ENCODE measurements at regions of chr7 and their contacts with region 1.

Region 1: DNA sequence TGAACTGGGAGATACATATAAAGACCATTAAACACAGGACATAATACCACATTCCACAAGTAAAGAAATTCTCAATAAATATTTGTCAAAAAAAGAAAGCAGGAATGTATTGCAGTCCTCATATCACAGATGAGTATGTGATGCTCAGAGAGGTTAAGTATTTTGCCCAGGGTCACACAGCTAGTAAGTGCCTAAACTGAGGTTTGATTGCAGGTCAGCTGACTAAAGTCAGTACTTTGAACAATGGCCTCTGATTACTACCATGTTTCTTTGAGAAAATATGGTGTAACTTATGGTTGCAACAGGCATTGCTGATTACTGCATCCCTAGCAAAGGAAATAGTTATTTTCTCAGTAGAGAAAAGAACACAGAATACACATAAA is 267.1 kb downstream of the ELMO1 start:
- DNase-seq: no peak
- H3K4me3 Mint-ChIP-seq: no peak overlapping the region
- H3K27ac Mint-ChIP-seq: no peak overlapping the region
- H3K4me1 Mint-ChIP-seq: no peaks in the 10 kb centered on the region
- H3K27me3 Mint-ChIP-seq: peaks cover 10% of the 10 kb centered on the region
- CTCF ChIP-seq: no peak

Region 2: DNA sequence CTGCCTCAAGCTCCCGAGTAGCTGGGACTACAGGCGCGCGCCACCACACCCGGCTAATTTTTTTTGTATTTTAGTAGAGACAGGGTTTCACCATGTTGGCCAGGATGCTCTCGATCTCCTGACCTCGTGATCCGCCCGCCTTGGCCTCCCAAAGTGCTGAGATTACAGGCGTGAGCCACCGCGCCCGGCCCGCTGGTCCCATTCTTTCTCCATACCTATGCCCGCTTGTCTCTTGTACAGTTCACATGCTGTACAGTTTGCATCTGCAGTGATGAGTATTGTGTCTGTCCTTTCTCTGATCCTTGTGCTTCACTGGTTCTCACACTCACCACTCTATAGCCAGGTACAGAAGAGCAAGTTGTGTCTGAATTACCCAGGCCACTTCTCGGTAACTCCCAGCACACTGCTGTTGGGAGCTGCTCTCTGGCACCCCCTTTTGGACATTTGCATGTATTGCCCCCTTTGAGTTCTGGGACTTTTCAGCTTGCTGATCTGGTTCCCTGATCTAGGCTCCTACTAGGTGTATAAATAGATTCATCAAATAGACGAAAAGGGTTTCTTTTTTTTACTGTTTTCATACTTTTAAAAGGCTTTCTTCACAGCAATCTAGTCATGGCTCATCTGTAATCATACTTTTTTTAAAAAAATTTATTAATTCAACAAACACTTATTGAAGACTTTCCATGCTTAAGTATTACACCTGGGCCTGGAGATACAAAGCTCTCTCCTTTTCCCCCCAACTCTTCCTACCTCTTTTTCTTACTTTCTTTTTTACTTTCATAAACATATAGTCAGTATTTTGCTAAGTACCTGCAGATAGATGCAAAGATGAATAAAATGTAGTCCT is 510.7 kb before region 1 on chr7:
- CTCF ChIA-PET with region 1: interaction called, 24 read pairs
- POLR2A ChIA-PET with region 1: no interaction called
- intact Hi-C with region 1: loop called (anchors 1 kb)
- DNase-seq: peak; percentile 85
- H3K4me3 Mint-ChIP-seq: no peak overlapping the region
- H3K27ac Mint-ChIP-seq: no peak overlapping the region
- H3K4me1 Mint-ChIP-seq: peaks cover 28% of the 10 kb centered on the region
- H3K27me3 Mint-ChIP-seq: no peaks in the 10 kb centered on the region
- CTCF ChIP-seq: peak; percentile 85

Region 3: DNA sequence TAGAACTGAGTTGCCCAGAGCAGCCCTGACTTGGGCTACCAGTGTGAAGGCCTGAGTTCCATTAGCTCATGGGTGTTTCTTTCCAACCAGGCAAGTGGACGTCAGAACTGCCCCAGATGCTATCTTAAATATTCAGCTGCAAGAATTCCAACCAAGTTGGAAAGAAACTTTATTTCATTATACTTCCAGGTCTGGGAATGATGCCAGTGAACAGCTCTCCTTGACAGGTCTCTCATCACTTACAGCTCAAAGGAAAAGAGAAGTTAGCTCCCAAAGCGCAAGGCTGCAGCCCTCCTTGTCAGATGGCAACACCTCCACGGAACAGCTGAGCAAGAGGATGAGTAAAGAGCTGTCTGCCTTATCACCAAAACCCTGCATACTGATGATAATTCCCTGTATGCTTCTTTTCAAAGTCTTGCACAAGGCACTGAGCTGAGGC is 201.7 kb before region 1 on chr7:
- CTCF ChIA-PET with region 1: interaction called, 101 read pairs
- POLR2A ChIA-PET with region 1: no interaction called
- intact Hi-C with region 1: no loop called
- DNase-seq: no peak
- H3K4me3 Mint-ChIP-seq: no peak overlapping the region
- H3K27ac Mint-ChIP-seq: no peak overlapping the region
- H3K4me1 Mint-ChIP-seq: no peaks in the 10 kb centered on the region
- H3K27me3 Mint-ChIP-seq: peaks cover 22% of the 10 kb centered on the region
- CTCF ChIP-seq: no peak

Region 4: DNA sequence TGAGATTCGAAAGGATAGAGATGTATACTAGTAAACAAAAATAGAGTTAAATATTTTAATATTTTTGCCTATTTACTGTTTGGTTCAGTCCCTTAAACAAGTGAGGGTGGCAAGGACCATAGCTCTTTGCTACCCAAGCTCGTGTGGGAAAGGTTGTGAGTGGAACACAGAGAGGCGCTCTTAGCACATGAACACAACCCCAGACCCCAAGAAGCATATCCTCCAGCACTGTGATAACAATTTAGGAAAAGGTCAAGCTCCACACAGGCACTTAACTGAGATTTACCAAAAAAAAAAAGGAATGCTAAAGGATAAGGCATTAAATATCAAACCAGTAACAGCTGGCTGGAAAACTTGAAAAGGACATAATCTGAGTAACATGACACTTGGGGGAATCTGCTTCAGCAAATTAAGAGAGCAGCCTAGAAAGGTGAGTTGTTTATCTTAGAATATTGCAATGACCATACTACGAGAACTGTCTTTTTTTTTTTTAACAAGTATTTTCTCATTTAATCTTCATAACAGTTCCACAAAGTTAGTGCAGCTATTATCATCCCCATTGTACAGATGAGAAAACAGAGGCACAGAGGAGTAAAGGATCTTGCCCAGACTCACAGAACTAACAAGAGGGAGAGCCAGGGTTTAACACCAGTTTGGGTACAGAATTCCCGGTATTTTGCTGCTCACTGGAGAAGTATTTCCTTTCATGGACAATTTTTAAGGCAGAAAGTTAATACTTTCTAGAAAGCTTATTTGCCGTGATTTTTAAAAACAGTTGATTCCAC is 153.8 kb before region 1 on chr7:
- CTCF ChIA-PET with region 1: interaction called, 6 read pairs
- POLR2A ChIA-PET with region 1: no interaction called
- intact Hi-C with region 1: loop called (anchors 5 kb)
- DNase-seq: peak; percentile 16
- H3K4me3 Mint-ChIP-seq: no peak overlapping the region
- H3K27ac Mint-ChIP-seq: no peak overlapping the region
- H3K4me1 Mint-ChIP-seq: peaks cover 17% of the 10 kb centered on the region
- H3K27me3 Mint-ChIP-seq: no peaks in the 10 kb centered on the region
- CTCF ChIP-seq: no peak

Region 5: DNA sequence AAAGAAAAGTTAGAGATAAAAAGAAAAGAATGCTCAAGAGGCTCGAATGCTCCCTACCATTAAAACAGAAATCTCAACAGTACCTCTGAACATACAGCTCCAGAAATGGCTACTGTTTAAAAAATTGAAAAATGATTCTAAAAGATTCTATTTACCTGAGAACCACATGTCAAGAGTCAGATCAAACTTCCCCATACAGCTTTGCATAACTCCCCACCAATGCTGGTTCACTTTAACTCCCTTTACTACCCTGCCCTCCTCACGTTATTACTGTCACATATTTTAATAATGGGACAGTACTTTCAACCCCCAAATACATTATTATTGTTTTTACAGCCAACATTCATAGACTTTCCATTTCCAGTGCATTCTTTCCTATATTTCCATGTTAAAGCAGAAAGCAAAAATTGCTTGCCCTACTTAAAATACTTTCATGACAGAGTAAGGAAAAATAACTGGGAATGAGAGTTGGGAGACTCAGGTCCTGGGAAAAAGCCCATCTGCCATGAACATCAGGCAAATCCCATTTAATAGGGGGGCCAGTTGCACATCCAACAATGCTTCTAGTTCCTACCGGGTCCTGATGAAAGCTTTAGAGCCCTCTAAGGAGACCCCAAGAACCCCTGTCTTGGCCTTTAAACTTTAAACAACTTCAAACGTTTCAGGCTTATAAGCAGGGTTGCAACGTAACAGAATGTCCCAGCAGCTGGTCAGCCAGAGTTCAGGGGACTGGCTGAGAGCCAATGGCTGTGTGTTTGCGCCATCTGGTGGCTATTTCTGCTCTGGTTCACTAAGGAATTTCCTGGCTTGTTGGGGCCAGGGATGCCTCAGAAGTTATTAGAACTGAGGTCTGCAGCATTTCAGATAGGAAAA is 19.7 kb after region 1 on chr7:
- CTCF ChIA-PET with region 1: interaction called, 25 read pairs
- POLR2A ChIA-PET with region 1: no interaction called
- intact Hi-C with region 1: no loop called
- DNase-seq: peak; percentile 79
- H3K4me3 Mint-ChIP-seq: no peak overlapping the region
- H3K27ac Mint-ChIP-seq: no peak overlapping the region
- H3K4me1 Mint-ChIP-seq: peaks cover 6% of the 10 kb centered on the region
- H3K27me3 Mint-ChIP-seq: no peaks in the 10 kb centered on the region
- CTCF ChIP-seq: peak; percentile 86

Region 6: DNA sequence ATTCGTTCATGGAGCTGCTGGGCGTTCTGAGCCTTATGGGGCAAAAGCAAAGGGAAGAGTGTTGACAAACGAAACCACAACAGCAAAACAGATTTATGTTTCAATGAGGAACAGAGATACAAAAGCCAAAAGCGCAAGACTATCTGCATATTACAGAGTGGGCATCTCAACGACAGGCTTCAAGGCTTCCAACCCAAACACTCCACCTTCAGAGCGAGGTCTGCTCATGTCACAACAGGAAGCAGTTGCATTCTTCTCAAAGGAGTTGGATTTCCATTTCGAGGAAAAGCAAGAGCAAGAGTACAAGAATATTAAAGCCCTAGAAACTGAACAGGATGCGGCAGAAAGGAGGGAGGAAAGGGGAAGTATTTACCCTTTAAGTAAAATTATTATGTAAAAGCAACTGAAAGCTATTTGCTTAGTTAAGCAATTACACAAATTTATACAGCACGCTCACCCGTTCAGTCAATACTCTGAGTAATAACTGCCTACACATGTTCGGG is 77.8 kb after region 1 on chr7:
- CTCF ChIA-PET with region 1: no interaction called
- POLR2A ChIA-PET with region 1: no interaction called
- intact Hi-C with region 1: no loop called
- DNase-seq: no peak
- H3K4me3 Mint-ChIP-seq: no peak overlapping the region
- H3K27ac Mint-ChIP-seq: no peak overlapping the region
- H3K4me1 Mint-ChIP-seq: peaks cover 11% of the 10 kb centered on the region
- H3K27me3 Mint-ChIP-seq: no peaks in the 10 kb centered on the region
- CTCF ChIP-seq: no peak

Region 7: DNA sequence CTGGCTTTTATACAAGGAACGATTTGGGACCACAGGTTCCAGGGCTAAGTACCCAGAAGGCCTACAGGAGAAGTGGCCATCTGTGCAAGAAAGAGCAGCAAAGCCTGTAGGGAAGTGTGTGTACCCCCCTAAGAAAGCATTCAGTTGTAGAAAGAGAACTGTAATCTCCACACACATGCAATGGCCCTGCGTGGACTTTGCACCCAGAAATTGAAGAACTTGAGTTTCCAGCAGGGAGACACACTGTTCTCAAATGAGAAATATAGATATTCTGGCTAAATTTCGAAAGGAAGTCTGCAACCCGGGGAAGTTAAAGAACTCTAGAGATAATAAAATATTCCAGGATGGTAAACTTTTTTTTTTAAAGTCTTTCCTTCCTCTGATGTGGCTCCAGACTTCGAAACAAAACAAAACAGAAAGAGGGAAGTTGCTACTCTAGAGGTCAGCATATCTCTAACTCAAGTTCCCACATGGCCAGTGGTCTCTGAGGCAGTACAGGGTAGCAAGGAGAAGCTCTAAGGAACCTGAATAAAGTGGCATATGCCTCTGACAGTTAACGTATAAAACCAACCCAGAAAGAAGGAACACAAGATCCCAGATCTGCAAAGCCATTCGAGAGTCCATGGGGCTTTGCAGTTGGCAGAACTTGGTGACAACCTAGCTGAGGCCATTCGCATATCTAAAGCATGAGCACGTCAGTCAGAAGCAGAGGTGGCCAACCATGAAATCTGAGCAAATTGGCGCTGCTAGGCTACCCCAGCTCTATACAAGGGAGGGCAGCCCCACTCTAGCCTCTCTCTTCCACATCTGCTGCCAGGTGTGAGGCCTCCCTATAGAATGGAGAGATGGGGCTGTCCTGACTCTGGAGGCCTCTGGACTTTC is 210.5 kb after region 1 on chr7:
- CTCF ChIA-PET with region 1: no interaction called
- POLR2A ChIA-PET with region 1: no interaction called
- intact Hi-C with region 1: no loop called
- DNase-seq: no peak
- H3K4me3 Mint-ChIP-seq: no peak overlapping the region
- H3K27ac Mint-ChIP-seq: no peak overlapping the region
- H3K4me1 Mint-ChIP-seq: no peaks in the 10 kb centered on the region
- H3K27me3 Mint-ChIP-seq: no peaks in the 10 kb centered on the region
- CTCF ChIP-seq: no peak